ENCODE measurements at regions of chr10 and their contacts with region 1.

Region 1: GRCh38 chr10:100346765-100347567 is at the start of gene SCD:
- DNase-seq: peak; percentile 87 to 91 (median 91)
- ATAC-seq: peak; percentile 88 to 93
- H3K4me3 ChIP-seq: peak within 1 kb of the TSS; percentile 51
- H3K27ac ChIP-seq: no peak within 1 kb of the TSS
- H3K4me1 ChIP-seq: peaks cover 9% of the 10 kb centered on the region
- H3K27me3 ChIP-seq: no peaks in the 10 kb centered on the region
- total RNA-seq, gene SCD: 12.2 to 45.4 (median 23.4) TPM

Region 2: GRCh38 chr10:100518761-100519241 is 171.8 kb after region 1 on chr10:
- intact Hi-C with region 1: loop called in 2 of 4 experiments (anchors 10 kb)
- DNase-seq: peak; percentile 38 to 83 (median 68)
- ATAC-seq: peak; percentile 67 to 68
- H3K4me3 ChIP-seq: peak overlapping the region; percentile 43
- H3K27ac ChIP-seq: no peak overlapping the region
- H3K4me1 ChIP-seq: no peaks in the 10 kb centered on the region
- H3K27me3 ChIP-seq: no peaks in the 10 kb centered on the region

Region 3: GRCh38 chr10:100529475-100530298 is 182.7 kb after region 1 on chr10 and contains the start of gene NDUFB8:
- intact Hi-C with region 1: loop called in 1 of 4 experiments (anchors 10 kb)
- DNase-seq: peak; percentile 91 to 96 (median 96)
- ATAC-seq: peak; percentile 92 to 94
- H3K4me3 ChIP-seq: peak within 1 kb of the TSS; percentile 85
- H3K27ac ChIP-seq: peak within 1 kb of the TSS; percentile 74
- H3K4me1 ChIP-seq: no peaks in the 10 kb centered on the region
- H3K27me3 ChIP-seq: no peaks in the 10 kb centered on the region
- total RNA-seq, gene NDUFB8: 344 to 447 (median 412) TPM

Measured in right cardiac atrium (tissue), 5 donors.